BJ (cell line): ENCODE measurements at regions of chr17 and their contacts with region 1.

Region 1: GRCh38 chr17:17681187-17681848 is at the start of gene RAI1:
- DNase-seq: no peak
- H3K4me3 ChIP-seq: peak within 1 kb of the TSS; percentile 80
- H3K27me3 ChIP-seq: no peaks in the 10 kb centered on the region
- CTCF ChIP-seq: 0 out of 2 replicates have a peak, but pooled peaks have one; percentile 6
- polyA plus RNA-seq, gene RAI1: 2.1 and 2.4 TPM in 2 replicates

Region 2: GRCh38 chr17:17666111-17666714 is 15.1 kb before region 1 on chr17:
- CTCF ChIA-PET with region 1: interaction called, 19 read pairs
- POLR2A ChIA-PET with region 1: interaction called, 3 read pairs
- DNase-seq: peak; percentile 38
- H3K4me3 ChIP-seq: no peak overlapping the region
- H3K27me3 ChIP-seq: no peaks in the 10 kb centered on the region
- CTCF ChIP-seq: no peak

Region 3: DNA sequence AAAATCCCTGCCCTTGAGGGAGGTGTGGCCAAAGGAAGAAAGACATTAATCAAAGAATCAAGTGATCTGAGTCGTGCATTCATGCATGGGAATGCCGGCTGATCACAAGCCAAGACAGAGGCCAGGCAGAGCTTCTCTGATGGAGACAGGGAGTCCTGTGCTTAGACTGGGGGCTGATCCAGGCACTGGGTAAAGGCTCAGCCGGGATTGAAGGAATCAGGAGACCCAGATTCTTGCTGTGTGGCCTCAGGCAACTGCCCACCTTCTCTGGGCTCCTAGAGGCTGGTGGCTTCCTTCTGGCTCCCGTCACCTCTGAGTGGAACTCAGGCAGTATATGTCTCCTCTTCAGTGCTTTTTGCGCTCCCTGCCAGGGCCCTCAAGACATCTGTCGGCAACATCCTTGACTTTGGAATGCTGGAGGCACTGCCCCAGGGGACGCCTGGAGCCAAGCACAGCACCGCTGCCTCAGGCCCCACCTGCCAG is 17.6 kb after region 1 on chr17:
- CTCF ChIA-PET with region 1: no interaction called
- POLR2A ChIA-PET with region 1: no interaction called
- DNase-seq: no peak
- H3K4me3 ChIP-seq: no peak overlapping the region
- H3K27me3 ChIP-seq: no peaks in the 10 kb centered on the region
- CTCF ChIP-seq: no peak

Region 4: DNA sequence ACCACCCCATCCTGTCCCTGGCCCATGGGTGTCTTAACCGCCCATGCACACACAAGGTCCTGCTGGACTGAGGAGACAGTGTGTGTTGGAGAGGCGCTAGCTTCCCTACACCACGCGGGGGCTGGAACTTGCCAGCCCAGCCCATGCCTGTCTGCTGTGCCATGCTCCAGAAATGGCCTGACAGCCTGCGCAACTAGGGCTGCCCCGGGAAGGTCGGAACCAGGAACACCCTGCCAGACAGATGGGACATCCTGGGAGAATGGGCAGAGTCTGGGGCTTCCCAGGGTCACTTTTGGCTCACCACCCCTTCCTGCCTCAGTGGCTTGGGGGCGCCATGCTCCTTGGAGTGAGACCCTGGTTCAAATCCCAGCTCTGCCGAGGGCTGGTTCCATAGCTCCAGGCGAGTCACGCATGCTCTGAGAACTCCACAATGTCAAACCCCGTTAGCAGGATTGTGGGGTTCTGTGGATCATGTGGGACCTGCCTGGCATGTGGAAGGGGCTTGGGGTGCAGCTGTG is 119.2 kb after region 1 on chr17:
- CTCF ChIA-PET with region 1: interaction called, 11 read pairs
- POLR2A ChIA-PET with region 1: no interaction called
- DNase-seq: no peak
- H3K4me3 ChIP-seq: no peak overlapping the region
- H3K27me3 ChIP-seq: no peaks in the 10 kb centered on the region
- CTCF ChIP-seq: no peak

Region 5: DNA sequence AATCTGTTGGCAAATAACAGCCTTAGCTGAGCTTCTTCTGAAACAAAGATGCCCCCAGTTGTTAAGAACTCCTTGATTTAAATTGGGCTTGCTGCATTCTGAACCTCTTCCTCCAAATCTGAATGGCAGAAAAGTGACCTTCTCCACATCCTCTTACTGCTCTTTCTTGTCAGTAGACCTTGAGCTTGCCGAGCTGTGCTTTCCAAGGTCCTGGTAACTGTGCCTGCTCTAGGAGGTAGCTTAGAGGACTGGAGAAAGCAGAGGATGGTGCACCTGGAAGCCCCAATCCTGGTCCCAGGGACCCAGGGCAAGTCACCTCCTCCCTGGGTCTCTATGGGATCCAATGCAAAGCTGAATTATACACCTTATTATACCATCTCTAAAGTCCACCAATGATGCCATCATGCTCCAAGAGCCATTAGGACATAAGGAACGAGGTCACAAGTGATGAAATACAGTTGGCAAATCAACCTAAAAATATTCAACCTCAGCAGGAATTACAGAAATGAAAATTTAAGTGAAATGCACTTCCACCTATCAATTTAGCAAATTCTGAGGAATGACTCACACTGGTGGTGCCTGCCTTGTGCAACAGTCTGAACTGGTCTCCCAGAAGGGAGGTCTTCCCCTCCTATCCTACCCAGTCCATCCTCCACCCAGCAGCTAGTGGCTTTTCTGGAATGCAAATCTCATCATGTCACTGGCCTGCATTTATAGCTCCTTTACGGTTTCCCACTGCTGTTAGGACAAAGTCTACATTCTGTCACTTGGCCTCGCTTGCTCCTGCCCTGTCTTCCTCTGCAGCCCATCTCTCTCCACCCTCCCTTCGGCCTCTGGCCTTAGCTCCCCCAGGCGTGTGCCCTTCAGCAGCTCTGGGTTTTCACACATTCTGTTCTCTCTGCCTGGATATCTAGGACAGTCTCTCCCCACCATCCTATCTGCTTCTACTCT is 254.3 kb after region 1 on chr17:
- CTCF ChIA-PET with region 1: no interaction called
- POLR2A ChIA-PET with region 1: no interaction called
- DNase-seq: peak; percentile 87
- H3K4me3 ChIP-seq: no peak overlapping the region
- H3K27me3 ChIP-seq: no peaks in the 10 kb centered on the region
- CTCF ChIP-seq: no peak